ENCODE measurements at regions of chr5 and their contacts with region 1.

Region 1: DNA sequence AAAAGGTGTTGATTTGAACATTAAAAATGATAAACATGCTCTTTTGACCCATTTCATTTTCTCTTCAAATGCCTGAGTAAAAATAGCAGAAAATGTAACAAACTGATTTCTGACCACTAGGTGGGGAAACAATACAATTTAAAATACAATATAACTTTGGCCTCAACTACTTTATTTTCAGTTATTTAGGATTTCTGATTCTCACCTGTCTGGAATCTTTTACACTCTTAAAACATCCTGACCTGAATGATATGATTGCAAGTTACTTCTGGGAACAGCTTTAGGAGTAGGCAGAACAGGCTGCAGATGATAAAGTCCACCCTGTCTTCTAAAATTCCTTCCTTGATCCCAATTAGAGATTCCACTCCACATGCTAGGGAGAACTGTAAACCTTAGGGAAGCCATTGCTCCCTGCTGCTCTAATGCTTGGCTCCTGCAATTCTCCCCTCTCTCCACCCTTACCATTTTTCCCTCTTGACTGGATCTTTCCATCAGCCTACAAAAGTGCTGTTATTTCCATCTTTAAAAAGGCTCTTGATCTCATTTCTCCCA is 70.3 kb downstream of the FYB1 start:
- DNase-seq: no peak
- H3K4me3 ChIP-seq: no peak overlapping the region
- H3K27ac ChIP-seq: no peak overlapping the region
- H3K4me1 ChIP-seq: no peaks in the 10 kb centered on the region
- H3K27me3 ChIP-seq: no peaks in the 10 kb centered on the region
- CTCF ChIP-seq: peak in 1 of 3 donors; percentile 16
- POLR2A ChIP-seq: no peak

Region 2: DNA sequence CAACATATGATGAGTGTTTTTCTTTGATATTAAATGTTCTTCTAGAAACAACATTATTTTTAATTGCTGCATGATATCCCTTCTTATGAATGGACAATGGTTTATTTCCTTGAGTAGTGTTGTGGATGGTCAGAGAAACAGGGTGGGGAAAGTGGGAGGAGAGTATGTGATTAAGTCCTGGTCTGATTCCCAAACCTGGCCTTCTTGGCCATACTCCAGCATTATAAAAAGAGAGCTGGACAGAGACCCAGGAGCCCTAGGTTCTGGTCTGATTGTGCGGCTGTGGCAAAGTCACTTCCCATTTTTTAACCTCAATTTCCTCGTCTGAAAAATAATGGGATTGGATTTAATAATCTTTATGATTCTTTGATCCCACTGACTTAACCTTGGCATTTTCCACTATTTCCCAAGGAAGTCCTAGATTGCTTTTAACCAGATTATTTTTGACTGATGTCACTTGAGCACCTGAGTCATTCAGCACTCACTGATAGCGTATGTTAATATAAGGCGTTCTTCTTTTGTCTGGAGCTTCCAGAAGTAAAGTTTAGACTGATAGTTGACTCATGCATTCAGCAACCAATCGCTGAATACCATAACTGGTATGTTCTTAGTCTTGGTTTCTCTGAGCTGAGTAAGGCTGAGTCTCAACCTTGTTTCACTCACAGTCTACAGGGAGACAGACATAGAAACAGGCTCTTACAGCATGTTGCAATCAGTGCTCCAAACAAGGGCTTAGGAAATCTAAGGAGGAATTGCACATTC is 277.1 kb before region 1 on chr5:
- intact Hi-C with region 1: no loop called
- DNase-seq: no peak
- H3K4me3 ChIP-seq: no peak overlapping the region
- H3K27ac ChIP-seq: no peak overlapping the region
- H3K4me1 ChIP-seq: no peaks in the 10 kb centered on the region
- H3K27me3 ChIP-seq: no peaks in the 10 kb centered on the region
- CTCF ChIP-seq: no peak
- POLR2A ChIP-seq: no peak

Region 3: GRCh38 chr5:39117401-39117800 is 31.7 kb before region 1 on chr5:
- intact Hi-C with region 1: loop called (anchors 2 kb)
- DNase-seq: no peak
- H3K4me3 ChIP-seq: no peak overlapping the region
- H3K27ac ChIP-seq: no peak overlapping the region
- H3K4me1 ChIP-seq: no peaks in the 10 kb centered on the region
- H3K27me3 ChIP-seq: no peaks in the 10 kb centered on the region
- CTCF ChIP-seq: no peak
- POLR2A ChIP-seq: no peak

Region 4: DNA sequence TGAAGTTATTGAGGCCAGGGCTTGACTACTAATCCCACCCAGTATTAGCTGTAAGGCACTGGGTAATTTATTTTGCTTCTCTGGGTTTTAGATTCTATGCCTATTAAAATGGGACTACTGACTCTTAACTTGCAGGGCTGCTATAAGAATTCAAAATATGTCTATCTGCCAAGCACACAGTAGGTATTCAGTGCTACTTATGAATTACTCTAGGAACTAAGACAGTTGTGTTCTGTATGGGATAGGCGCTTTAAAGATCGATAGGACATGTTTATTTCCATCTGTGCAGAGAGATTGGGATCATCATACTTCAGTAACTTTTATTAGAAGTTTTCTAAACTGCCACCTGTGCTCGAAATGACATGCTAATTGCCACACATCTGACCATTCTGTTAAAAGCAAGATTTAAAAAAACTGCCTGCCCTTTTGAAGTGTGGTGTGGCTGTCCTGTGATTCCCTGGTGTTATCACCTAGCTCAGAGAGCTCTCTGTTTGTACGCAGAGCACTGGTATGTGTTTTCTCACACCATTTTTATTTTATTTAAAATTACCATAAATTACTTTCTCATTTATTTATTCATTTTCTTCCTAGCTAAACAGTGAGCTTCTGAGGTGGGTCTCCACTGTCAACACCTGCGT is 11.6 kb after region 1 on chr5:
- intact Hi-C with region 1: loop called (anchors 1 kb)
- DNase-seq: no peak
- H3K4me3 ChIP-seq: no peak overlapping the region
- H3K27ac ChIP-seq: no peak overlapping the region
- H3K4me1 ChIP-seq: no peaks in the 10 kb centered on the region
- H3K27me3 ChIP-seq: no peaks in the 10 kb centered on the region
- CTCF ChIP-seq: no peak
- POLR2A ChIP-seq: no peak

Region 5: GRCh38 chr5:39835371-39835770 is 686.3 kb after region 1 on chr5:
- intact Hi-C with region 1: no loop called
- DNase-seq: no peak
- H3K4me3 ChIP-seq: no peak overlapping the region
- H3K27ac ChIP-seq: no peak overlapping the region
- H3K4me1 ChIP-seq: no peaks in the 10 kb centered on the region
- H3K27me3 ChIP-seq: no peaks in the 10 kb centered on the region
- CTCF ChIP-seq: no peak
- POLR2A ChIP-seq: no peak